ENCODE measurements at regions of chr10 and their contacts with region 1.

Region 1: GRCh38 chr10:12782537-12782936 is 219.0 kb downstream of the CCDC3 start:
- DNase-seq: no peak
- H3K4me3 ChIP-seq: no peak overlapping the region
- H3K27ac ChIP-seq: no peak overlapping the region
- H3K4me1 ChIP-seq: peaks cover 0 to 11% (median 3%) of the 10 kb centered on the region in 4 donors
- H3K27me3 ChIP-seq: no peaks in the 10 kb centered on the region
- CTCF ChIP-seq: peak; percentile 61 to 66

Region 2: DNA sequence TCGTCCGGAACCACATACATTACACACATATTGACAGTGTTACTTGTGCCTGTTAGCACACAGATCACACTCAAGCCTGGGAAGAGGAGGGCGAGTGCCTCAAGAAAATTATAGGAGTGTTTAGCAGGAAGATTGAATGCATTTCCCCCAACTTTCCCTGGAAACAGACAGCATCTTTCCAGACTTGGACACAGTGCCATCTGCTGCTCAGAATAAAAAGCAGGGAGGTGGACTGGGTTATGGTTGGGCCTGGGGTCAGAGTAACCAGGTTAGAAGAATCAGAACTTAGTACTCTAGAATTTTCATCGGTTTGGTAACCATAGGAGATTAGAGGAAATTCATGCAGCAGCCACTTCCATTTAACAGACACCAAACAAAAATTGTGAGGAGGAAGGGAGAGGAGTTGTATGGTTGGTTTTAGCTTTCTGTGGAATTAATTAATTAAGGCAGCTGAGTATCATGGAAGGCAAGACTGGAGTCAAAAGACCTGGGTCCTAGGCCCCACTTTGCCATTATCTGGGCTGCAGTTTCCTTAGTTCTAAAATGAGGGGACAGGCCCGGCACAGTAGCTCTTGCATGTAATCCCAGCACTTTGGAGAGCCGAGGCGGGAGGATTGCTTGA is 274.0 kb after region 1 on chr10:
- intact Hi-C with region 1: loop called (anchors 5 kb)
- DNase-seq: no peak
- H3K4me3 ChIP-seq: no peak overlapping the region
- H3K27ac ChIP-seq: no peak overlapping the region
- H3K4me1 ChIP-seq: no peaks in the 10 kb centered on the region
- H3K27me3 ChIP-seq: no peaks in the 10 kb centered on the region
- CTCF ChIP-seq: peak; percentile 54 to 58

Region 3: GRCh38 chr10:13074561-13075451 is 292.3 kb after region 1 on chr10:
- intact Hi-C with region 1: loop called (anchors 5 kb)
- DNase-seq: peak; percentile 69 to 77
- H3K4me3 ChIP-seq: no peak overlapping the region
- H3K27ac ChIP-seq: no peak overlapping the region
- H3K4me1 ChIP-seq: no peaks in the 10 kb centered on the region
- H3K27me3 ChIP-seq: peaks cover 0 to 5% of the 10 kb centered on the region in 2 donors
- CTCF ChIP-seq: peak; percentile 79 to 86

Measured in tibial artery (tissue), 4 donors.